Activated T-helper 2 cell treated with anti-CD3 and anti-CD28 coated beads, Interferon-gamma antibody, Interleukin-2, Interleukin-4, amounts not matched to agents 10 μg/mL and 5 μg/mL and 100 μg/mL, durations not matched to agents 14 hours and 24 hours and 36 hours (primary cell): ENCODE measurements at regions of chr21 and their contacts with region 1.

Region 1: GRCh38 chr21:42337830-42338728 is 12.7 kb downstream of the TFF2 start:
- DNase-seq: peak; percentile 65
- H3K4me3 Mint-ChIP-seq: no peak overlapping the region
- H3K27ac Mint-ChIP-seq: no peak overlapping the region
- H3K4me1 Mint-ChIP-seq: peaks cover 15% of the 10 kb centered on the region
- H3K27me3 Mint-ChIP-seq: peaks cover 15% of the 10 kb centered on the region

Region 2: GRCh38 chr21:42406201-42406621 is 68.1 kb after region 1 on chr21:
- intact Hi-C with region 1: loop called (anchors 5 kb)
- DNase-seq: peak; percentile 63
- H3K4me3 Mint-ChIP-seq: peak overlapping the region; percentile 93
- H3K27ac Mint-ChIP-seq: peak overlapping the region; percentile 90
- H3K4me1 Mint-ChIP-seq: peaks cover 38% of the 10 kb centered on the region
- H3K27me3 Mint-ChIP-seq: no peaks in the 10 kb centered on the region